ENCODE measurements at regions of chr15 and their contacts with region 1.

Region 1: GRCh38 chr15:59528965-59529402 is 82.6 kb upstream of the GCNT3 start:
- DNase-seq: peak; percentile 95
- ATAC-seq: peak; percentile 98
- H3K4me3 ChIP-seq: no peak overlapping the region
- H3K27ac ChIP-seq: no peak overlapping the region
- H3K4me1 ChIP-seq: no peaks in the 10 kb centered on the region; the same call in 1 of the 2 replicates
- H3K27me3 ChIP-seq: no peaks in the 10 kb centered on the region
- CTCF ChIP-seq: peak; percentile 78

Region 2: DNA sequence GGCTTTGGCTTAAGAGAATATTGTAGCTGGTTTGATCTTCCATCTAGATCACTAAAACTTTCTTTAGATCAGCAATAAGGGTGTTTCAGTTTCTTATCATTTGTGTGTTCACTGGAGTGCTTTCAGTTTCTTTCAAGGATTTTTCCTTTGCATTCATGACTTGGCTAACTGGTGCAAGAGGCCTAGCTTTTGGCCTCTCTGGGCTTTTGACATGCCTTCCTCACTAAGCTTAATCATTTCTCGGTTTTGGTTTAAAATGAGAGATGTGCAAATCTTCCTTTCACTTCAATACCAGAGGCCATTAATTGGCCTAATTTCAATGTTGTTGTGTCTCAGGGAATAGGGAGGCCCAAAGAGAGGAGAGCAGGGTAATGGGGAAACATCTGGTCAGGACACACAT is 454.4 kb before region 1 on chr15:
- CTCF ChIA-PET with region 1: no interaction called
- POLR2A ChIA-PET with region 1: no interaction called
- intact Hi-C with region 1: no loop called
- DNase-seq: no peak
- ATAC-seq: no peak
- H3K4me3 ChIP-seq: no peak overlapping the region
- H3K27ac ChIP-seq: no peak overlapping the region
- H3K4me1 ChIP-seq: no peaks in the 10 kb centered on the region
- H3K27me3 ChIP-seq: no peaks in the 10 kb centered on the region
- CTCF ChIP-seq: no peak

Region 3: GRCh38 chr15:59104912-59105732 is 423.9 kb before region 1 on chr15 and contains the start of gene CCNB2:
- CTCF ChIA-PET with region 1: no interaction called
- POLR2A ChIA-PET with region 1: no interaction called
- intact Hi-C with region 1: loop called (anchors 1 kb)
- DNase-seq: peak; percentile 88
- ATAC-seq: peak; percentile 98
- H3K4me3 ChIP-seq: peak within 1 kb of the TSS; percentile 80
- H3K27ac ChIP-seq: peak within 1 kb of the TSS; percentile 47
- H3K4me1 ChIP-seq: peaks cover 9% of the 10 kb centered on the region; the same call in 1 of the 2 replicates
- H3K27me3 ChIP-seq: no peaks in the 10 kb centered on the region
- CTCF ChIP-seq: no peak
- total RNA-seq, gene CCNB2: 54.3 and 61.7 TPM in 2 replicates

Region 4: GRCh38 chr15:59372352-59373211 is 156.4 kb before region 1 on chr15 and contains the start of gene MYO1E:
- CTCF ChIA-PET with region 1: no interaction called
- POLR2A ChIA-PET with region 1: no interaction called
- intact Hi-C with region 1: no loop called
- DNase-seq: peak; percentile 96
- ATAC-seq: peak; percentile 87
- H3K4me3 ChIP-seq: peak within 1 kb of the TSS; percentile 89
- H3K27ac ChIP-seq: peak within 1 kb of the TSS; percentile 53
- H3K4me1 ChIP-seq: peaks cover 33% of the 10 kb centered on the region
- H3K27me3 ChIP-seq: no peaks in the 10 kb centered on the region
- CTCF ChIP-seq: no peak
- total RNA-seq, gene MYO1E: 67.7 and 68.8 TPM in 2 replicates

Region 5: DNA sequence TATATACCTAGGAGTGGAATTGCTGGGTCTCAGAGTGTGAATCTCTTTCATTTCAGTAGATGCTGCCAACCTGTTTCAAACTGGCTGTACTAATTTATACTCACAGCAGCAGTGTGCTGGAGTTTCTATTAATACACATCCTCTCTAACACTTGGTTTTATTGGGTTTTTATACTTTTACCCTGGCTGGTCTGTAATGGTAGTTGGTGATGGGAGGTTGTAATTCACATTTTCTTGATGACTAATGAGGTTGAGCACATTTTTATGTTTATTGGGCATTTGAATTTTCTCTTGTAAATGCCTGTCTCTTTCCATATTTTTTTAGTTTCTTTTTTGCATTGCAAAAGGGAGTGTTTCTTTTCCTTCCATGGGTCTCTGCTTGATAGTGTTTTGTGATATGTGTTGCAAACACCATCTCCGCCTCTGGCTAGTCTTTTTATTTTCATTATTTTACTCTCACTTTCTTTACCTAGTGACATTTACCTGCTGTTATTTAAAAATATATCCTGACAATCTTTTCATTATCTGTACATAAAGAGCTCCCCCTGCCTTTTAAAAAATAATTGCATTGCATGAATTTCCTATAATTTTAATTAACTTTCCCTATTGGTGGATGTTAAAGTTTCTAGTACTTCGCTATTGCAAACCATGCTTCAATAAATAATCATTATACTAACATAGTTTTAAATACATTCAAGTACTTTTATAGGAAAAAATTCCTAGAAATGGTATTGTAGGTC is 33.6 kb after region 1 on chr15:
- CTCF ChIA-PET with region 1: interaction called, 5 read pairs
- POLR2A ChIA-PET with region 1: no interaction called
- intact Hi-C with region 1: loop called (anchors 2 kb)
- DNase-seq: no peak
- ATAC-seq: peak; percentile 35; the same call in 1 of the 2 replicates
- H3K4me3 ChIP-seq: no peak overlapping the region
- H3K27ac ChIP-seq: no peak overlapping the region
- H3K4me1 ChIP-seq: peaks cover 9% of the 10 kb centered on the region
- H3K27me3 ChIP-seq: no peaks in the 10 kb centered on the region
- CTCF ChIP-seq: peak; percentile 49; the same call in 1 of the 2 replicates

Region 6: GRCh38 chr15:59622289-59622688 is 93.3 kb after region 1 on chr15:
- CTCF ChIA-PET with region 1: interaction called, 6 read pairs
- POLR2A ChIA-PET with region 1: interaction called, 3 read pairs
- intact Hi-C with region 1: loop called (anchors 1 kb)
- DNase-seq: peak; percentile 86
- ATAC-seq: peak; percentile 100
- H3K4me3 ChIP-seq: no peak overlapping the region
- H3K27ac ChIP-seq: no peak overlapping the region
- H3K4me1 ChIP-seq: no peaks in the 10 kb centered on the region
- H3K27me3 ChIP-seq: no peaks in the 10 kb centered on the region
- CTCF ChIP-seq: peak; percentile 70

Region 7: GRCh38 chr15:59642351-59642750 is 113.4 kb after region 1 on chr15:
- CTCF ChIA-PET with region 1: interaction called, 4 read pairs
- POLR2A ChIA-PET with region 1: no interaction called
- intact Hi-C with region 1: loop called (anchors 1 kb)
- DNase-seq: no peak
- ATAC-seq: no peak
- H3K4me3 ChIP-seq: no peak overlapping the region
- H3K27ac ChIP-seq: no peak overlapping the region
- H3K4me1 ChIP-seq: no peaks in the 10 kb centered on the region
- H3K27me3 ChIP-seq: no peaks in the 10 kb centered on the region
- CTCF ChIP-seq: peak; percentile 47; the same call in 1 of the 2 replicates

Measured in PC-3 (cell line).